Transverse colon (tissue), 4 donors: ENCODE measurements at regions of chr7 and their contacts with region 1.

Region 1: GRCh38 chr7:135509903-135510602 is at the start of gene CNOT4:
- DNase-seq: peak; percentile 98
- H3K4me3 ChIP-seq: peak within 1 kb of the TSS; percentile 66 to 94 (median 84)
- H3K27ac ChIP-seq: peak within 1 kb of the TSS; percentile 91 to 97 (median 95)
- H3K4me1 ChIP-seq: peaks cover 9 to 32% (median 23%) of the 10 kb centered on the region in 4 donors
- H3K27me3 ChIP-seq: no peaks in the 10 kb centered on the region
- CTCF ChIP-seq: no peak
- EP300 ChIP-seq: no peak
- POLR2A ChIP-seq: peak; percentile 71
- total RNA-seq, gene CNOT4: 18.4 to 82.2 (median 29.9) TPM

Region 2: DNA sequence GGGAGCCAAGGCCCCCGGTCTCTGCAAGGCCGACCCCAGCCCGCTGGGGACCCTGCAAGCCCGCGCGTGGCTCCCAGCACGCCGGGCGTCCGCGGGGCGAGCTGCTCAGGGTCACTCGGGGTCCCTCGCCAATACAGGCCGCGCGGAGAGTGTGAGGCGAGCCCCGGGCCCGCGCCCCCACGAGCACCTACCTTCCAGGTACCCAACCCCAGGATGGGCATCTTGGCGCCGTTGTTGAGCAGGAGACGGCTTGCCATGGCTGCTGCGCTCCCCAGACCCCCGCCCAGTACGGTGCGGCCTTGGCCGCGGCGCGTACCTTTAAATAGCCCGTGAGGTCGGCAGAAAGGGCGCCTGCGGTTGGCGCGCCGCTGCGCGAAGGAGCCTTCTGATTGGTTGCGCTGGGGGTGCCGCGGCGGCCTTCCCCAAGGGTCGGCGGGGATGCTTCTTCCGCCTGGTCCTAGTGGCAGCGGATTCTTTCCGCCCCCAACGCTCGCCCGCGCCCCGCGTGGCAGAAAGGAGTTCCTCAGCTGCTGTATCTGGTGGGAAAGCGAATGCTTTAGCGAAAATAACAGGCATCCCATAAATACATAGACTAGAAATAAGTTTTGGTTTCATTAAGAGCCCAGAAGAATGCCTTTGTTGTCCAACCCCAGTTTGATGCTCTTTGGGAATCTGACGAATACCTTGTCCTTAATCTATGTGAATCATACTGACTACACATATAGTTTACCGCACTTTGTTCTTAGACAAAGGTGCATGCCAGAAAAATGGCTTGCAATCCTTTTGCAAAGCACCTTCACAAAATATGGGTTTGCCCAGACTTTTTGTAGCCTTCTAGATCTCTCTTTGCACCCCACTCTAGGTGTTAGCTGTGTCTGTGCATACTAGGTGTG is 1051.0 kb before region 1 on chr7 and contains the start of gene AKR1B1:
- in situ Hi-C with region 1: no loop called
- intact Hi-C with region 1: loop called (anchors 10 kb)
- DNase-seq: peak; percentile 89
- H3K4me3 ChIP-seq: peak within 1 kb of the TSS; percentile 72 to 92 (median 79)
- H3K27ac ChIP-seq: peak within 1 kb of the TSS; percentile 84 to 91 (median 90)
- H3K4me1 ChIP-seq: peaks cover 4 to 29% (median 9%) of the 10 kb centered on the region in 4 donors
- H3K27me3 ChIP-seq: no peaks in the 10 kb centered on the region
- CTCF ChIP-seq: peak; percentile 42 to 63 (median 50)
- EP300 ChIP-seq: no peak
- POLR2A ChIP-seq: peak; percentile 58
- total RNA-seq, gene AKR1B1: 6.4 to 37.2 (median 19.4) TPM

Region 3: GRCh38 chr7:134685250-134685649 is 824.8 kb before region 1 on chr7:
- in situ Hi-C with region 1: no loop called
- intact Hi-C with region 1: no loop called
- DNase-seq: no peak
- H3K4me3 ChIP-seq: no peak overlapping the region
- H3K27ac ChIP-seq: no peak overlapping the region
- H3K4me1 ChIP-seq: peaks cover 0 to 4% (median under 1%) of the 10 kb centered on the region in 4 donors
- H3K27me3 ChIP-seq: no peaks in the 10 kb centered on the region
- CTCF ChIP-seq: no peak
- EP300 ChIP-seq: no peak
- POLR2A ChIP-seq: no peak

Region 4: GRCh38 chr7:135602304-135602703 is 92.3 kb after region 1 on chr7:
- in situ Hi-C with region 1: no loop called
- intact Hi-C with region 1: no loop called
- DNase-seq: no peak
- H3K4me3 ChIP-seq: no peak overlapping the region
- H3K27ac ChIP-seq: no peak overlapping the region
- H3K4me1 ChIP-seq: no peaks in the 10 kb centered on the region
- H3K27me3 ChIP-seq: no peaks in the 10 kb centered on the region
- CTCF ChIP-seq: no peak
- EP300 ChIP-seq: no peak
- POLR2A ChIP-seq: no peak